Lower leg skin (tissue), 4 donors: ENCODE measurements at regions of chr4 and their contacts with region 1.

Region 1: GRCh38 chr4:53622739-53623151 is 31.5 kb upstream of the LNX1 start:
- DNase-seq: no peak
- H3K4me3 ChIP-seq: no peak overlapping the region
- CTCF ChIP-seq: no peak
- POLR2A ChIP-seq: no peak

Region 2: DNA sequence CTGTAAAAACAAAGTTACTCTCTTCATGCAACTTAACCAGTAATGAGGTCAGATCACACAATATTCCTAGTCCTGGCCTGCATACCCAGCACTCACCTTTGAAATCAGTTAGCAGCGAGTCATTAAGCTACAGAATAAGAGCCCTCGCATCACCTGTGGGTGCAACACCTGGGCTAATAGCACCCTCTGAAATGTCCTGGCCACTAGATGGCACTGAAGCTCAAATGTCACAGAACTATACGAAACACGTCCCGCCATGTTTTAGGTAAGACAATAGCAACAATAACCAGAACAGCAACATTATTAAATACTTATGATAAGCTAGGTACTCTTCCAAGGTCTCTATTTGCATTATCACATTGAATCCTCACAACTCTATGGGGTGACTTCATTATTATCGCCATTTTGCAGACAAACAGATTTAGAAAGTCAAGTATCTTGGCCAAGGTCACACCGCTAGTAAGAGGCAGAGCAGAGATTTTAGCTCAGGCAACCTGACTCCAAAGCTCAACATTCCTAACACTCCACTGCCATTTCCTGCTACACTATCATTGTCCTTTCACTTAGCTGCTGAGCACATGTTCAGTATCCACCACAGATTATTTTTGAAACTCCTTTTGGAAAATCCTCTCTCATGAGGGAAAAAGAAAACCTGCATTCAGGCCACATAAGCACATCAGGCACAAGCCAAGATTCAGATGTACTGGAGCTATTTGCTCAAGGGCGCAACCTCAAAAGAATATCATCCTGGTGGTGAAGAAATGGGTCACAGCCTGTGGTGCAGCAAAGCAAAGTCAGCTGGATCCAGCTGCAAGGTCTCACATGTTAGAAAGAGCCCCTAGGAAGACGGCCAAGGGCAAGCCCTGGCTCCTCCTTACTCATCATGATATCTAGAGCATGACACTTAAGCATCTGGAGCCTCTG is 1562.1 kb after region 1 on chr4:
- intact Hi-C with region 1: loop called (anchors 5 kb)
- DNase-seq: peak in 1 of 2 donors; percentile 25
- H3K4me3 ChIP-seq: no peak overlapping the region
- CTCF ChIP-seq: no peak
- POLR2A ChIP-seq: no peak